ENCODE measurements at regions of chr10 and their contacts with region 1.

Region 1: DNA sequence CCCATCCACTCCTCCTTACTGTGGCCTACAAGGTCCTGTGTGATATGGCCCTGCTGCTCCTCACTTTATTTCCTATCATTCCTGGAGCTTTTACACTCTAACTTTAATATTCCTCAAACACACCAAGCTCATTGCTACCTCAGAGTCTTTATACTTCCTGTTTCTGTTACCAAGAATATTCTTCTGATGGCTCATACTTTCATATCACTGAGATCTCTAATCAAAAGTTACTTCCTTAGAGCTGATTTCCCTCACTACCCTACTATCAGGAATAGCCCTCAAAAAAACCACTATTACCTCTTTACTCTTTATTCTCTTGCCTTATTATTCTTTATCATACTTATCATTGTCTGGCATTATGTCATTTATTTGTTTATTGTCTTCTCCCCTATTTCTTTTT is 5.8 kb upstream of the PPP3CB start:
- DNase-seq: no peak
- H3K4me3 ChIP-seq: no peak overlapping the region
- H3K27ac ChIP-seq: no peak overlapping the region
- H3K4me1 ChIP-seq: peaks cover 5% of the 10 kb centered on the region
- H3K27me3 ChIP-seq: no peaks in the 10 kb centered on the region
- CTCF ChIP-seq: no peak

Region 2: DNA sequence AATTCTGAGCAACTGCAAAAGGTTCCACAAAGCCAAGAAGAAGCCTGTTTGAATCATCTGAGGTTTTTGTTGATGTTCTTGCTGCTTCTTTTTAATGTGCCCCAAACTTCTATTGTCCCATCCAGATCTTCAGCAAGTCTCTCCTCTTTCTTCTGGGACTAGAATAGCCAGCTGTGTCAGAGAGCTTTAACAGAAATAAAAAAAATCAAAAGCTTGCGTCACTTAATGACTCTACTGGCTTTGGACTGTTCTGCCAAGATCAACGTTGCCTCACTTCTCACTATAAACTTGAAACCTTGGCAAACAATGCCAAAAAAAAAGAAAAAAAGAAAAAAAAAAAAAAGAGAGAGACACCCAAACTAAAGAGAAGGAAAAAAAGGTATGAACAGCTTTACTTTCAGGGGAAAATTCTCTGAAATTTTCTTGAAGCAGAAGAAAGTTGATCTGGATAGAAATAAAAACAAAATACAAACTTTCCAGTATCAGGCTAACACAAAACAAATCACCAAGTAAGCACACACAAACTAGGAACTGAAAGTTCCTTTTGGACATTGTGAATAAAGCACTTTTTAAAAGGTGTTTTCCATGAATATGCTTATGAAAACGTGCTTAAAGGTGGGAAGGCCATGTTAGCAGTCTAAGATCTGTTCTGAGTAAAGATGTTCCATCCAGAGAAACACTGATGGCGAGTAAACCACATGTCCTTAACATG is 74.7 kb after region 1 on chr10:
- CTCF ChIA-PET with region 1: no interaction called
- dilution Hi-C with region 1: loop called (anchors 5 kb)
- in situ Hi-C with region 1: no loop called
- intact Hi-C with region 1: no loop called
- DNase-seq: peak; percentile 69
- H3K4me3 ChIP-seq: no peak overlapping the region
- H3K27ac ChIP-seq: no peak overlapping the region
- H3K4me1 ChIP-seq: peaks cover 3% of the 10 kb centered on the region
- H3K27me3 ChIP-seq: no peaks in the 10 kb centered on the region
- CTCF ChIP-seq: no peak

Region 3: GRCh38 chr10:74322141-74322540 is 820.5 kb after region 1 on chr10:
- CTCF ChIA-PET with region 1: no interaction called
- dilution Hi-C with region 1: no loop called
- in situ Hi-C with region 1: no loop called
- intact Hi-C with region 1: no loop called
- DNase-seq: no peak
- H3K4me3 ChIP-seq: no peak overlapping the region
- H3K27ac ChIP-seq: no peak overlapping the region
- H3K4me1 ChIP-seq: no peaks in the 10 kb centered on the region
- H3K27me3 ChIP-seq: no peaks in the 10 kb centered on the region
- CTCF ChIP-seq: no peak